A673 (cell line): ENCODE measurements at regions of chr10 and their contacts with region 1.

Region 1: GRCh38 chr10:87064651-87065050 is 30.0 kb downstream of the GLUD1 start:
- DNase-seq: peak; percentile 56
- H3K4me3 ChIP-seq: no peak overlapping the region
- H3K27ac ChIP-seq: peak overlapping the region; percentile 29
- H3K4me1 ChIP-seq: peaks cover 23% of the 10 kb centered on the region
- H3K27me3 ChIP-seq: no peaks in the 10 kb centered on the region
- CTCF ChIP-seq: no peak

Region 2: DNA sequence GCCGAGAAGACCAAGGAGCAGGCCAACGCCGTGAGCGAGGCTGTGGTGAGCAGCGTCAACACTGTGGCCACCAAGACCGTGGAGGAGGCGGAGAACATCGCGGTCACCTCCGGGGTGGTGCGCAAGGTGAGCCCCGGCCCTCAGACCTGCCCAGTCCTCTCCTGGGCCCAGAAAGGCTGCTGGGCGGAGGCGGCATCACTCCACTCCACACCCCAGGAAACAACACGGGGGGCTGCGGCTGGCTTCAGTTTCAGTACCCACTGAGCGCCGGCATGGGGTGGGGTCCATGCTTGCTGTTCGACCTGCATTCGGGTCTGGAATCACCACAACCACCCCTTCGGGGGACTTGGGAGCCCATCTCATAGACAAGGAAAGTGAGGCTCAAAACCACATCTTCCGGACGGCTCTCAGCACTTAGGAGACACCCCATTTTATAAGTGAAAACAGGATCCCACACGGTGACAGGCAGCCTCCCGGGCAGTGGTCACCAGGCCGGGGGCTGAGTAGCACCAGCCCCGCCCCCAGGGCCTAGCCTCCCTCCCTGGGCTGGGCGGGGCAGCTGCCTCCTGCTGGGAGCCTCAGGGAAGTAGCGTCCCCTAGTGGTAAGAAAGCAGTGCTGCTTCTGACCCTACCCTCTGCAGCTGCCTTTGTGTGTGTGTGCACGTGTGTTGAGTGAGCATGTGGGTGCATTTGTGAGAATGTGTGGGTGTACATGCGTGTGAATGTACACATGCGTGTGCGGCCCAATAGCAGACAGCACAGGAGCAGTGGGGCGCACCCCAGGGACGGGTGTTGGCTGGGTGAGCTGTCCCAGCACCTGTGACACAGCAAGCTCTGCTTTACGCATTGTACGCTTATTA is 104.4 kb before region 1 on chr10:
- CTCF ChIA-PET with region 1: no interaction called
- POLR2A ChIA-PET with region 1: no interaction called
- intact Hi-C with region 1: no loop called
- DNase-seq: peak; percentile 60
- H3K4me3 ChIP-seq: no peak overlapping the region
- H3K27ac ChIP-seq: no peak overlapping the region
- H3K4me1 ChIP-seq: peaks cover 6% of the 10 kb centered on the region
- H3K27me3 ChIP-seq: no peaks in the 10 kb centered on the region
- CTCF ChIP-seq: peak; percentile 88

Region 3: GRCh38 chr10:87079106-87079836 is 14.6 kb after region 1 on chr10:
- CTCF ChIA-PET with region 1: no interaction called
- POLR2A ChIA-PET with region 1: interaction called, 23 read pairs
- intact Hi-C with region 1: no loop called
- DNase-seq: no peak
- H3K4me3 ChIP-seq: no peak overlapping the region
- H3K27ac ChIP-seq: no peak overlapping the region
- H3K4me1 ChIP-seq: peaks cover 17% of the 10 kb centered on the region
- H3K27me3 ChIP-seq: no peaks in the 10 kb centered on the region
- CTCF ChIP-seq: no peak